A673 (cell line): ENCODE measurements at regions of chr6 and their contacts with region 1.

Region 1: GRCh38 chr6:11496152-11497060 is 41.1 kb upstream of the TMEM170B start:
- DNase-seq: peak; percentile 86
- H3K4me3 ChIP-seq: no peak overlapping the region
- H3K27ac ChIP-seq: no peak overlapping the region
- H3K4me1 ChIP-seq: no peaks in the 10 kb centered on the region
- H3K27me3 ChIP-seq: no peaks in the 10 kb centered on the region
- CTCF ChIP-seq: peak; percentile 92

Region 2: DNA sequence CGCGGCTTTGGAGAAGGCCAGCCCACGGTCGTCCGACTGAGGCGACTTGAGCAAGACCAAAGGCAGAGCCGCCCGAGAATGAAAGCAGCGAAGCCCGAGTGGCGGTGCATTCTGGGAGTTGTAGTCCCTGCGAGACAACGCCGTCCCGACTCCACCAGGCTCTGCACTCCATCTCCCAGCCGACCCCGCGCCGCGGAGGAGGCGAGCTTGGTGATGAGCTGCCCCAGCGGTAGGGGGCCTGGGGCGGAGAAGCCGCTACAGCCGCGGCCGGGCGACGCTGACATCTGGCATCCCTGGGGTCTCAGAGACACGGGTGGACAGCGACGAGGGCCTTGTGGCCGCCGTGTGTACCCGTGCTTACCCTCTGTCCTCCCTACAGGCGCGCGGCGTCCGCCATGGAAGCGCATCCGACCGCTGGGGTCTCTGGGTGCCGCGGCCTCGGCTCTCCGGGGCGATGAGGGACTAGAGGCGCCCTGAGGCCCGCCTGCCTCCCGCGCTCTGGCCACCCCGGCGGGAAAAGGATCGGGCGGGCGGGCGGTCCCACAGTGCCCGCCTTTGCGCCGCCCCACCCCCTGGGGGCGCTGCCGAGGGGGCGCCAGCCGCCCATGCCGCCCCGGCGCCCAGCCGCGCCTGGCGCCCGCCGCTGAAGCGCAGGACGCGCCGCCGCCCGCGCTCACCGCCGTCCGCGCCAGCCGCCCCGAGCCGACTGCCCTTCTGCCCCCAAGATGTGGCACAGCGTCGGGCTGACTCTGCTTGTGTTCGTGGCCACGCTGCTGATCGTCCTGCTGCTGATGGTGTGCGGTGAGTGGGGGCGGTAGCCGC is 402.6 kb before region 1 on chr6 and contains the start of gene SMIM13:
- CTCF ChIA-PET with region 1: no interaction called
- POLR2A ChIA-PET with region 1: no interaction called
- intact Hi-C with region 1: loop called (anchors 1 kb)
- DNase-seq: peak; percentile 99
- H3K4me3 ChIP-seq: peak within 1 kb of the TSS; percentile 84
- H3K27ac ChIP-seq: peak within 1 kb of the TSS; percentile 94
- H3K4me1 ChIP-seq: peaks cover 19% of the 10 kb centered on the region
- H3K27me3 ChIP-seq: no peaks in the 10 kb centered on the region
- CTCF ChIP-seq: peak; percentile 42
- total RNA-seq, gene SMIM13: 16.8 and 18.9 TPM in 2 replicates

Region 3: GRCh38 chr6:11172501-11173332 is 323.7 kb before region 1 on chr6:
- CTCF ChIA-PET with region 1: interaction called, 9 read pairs
- POLR2A ChIA-PET with region 1: no interaction called
- intact Hi-C with region 1: loop called (anchors 1 kb)
- DNase-seq: peak; percentile 76
- H3K4me3 ChIP-seq: no peak overlapping the region
- H3K27ac ChIP-seq: no peak overlapping the region
- H3K4me1 ChIP-seq: peaks cover 4% of the 10 kb centered on the region
- H3K27me3 ChIP-seq: no peaks in the 10 kb centered on the region
- CTCF ChIP-seq: peak; percentile 93

Region 4: DNA sequence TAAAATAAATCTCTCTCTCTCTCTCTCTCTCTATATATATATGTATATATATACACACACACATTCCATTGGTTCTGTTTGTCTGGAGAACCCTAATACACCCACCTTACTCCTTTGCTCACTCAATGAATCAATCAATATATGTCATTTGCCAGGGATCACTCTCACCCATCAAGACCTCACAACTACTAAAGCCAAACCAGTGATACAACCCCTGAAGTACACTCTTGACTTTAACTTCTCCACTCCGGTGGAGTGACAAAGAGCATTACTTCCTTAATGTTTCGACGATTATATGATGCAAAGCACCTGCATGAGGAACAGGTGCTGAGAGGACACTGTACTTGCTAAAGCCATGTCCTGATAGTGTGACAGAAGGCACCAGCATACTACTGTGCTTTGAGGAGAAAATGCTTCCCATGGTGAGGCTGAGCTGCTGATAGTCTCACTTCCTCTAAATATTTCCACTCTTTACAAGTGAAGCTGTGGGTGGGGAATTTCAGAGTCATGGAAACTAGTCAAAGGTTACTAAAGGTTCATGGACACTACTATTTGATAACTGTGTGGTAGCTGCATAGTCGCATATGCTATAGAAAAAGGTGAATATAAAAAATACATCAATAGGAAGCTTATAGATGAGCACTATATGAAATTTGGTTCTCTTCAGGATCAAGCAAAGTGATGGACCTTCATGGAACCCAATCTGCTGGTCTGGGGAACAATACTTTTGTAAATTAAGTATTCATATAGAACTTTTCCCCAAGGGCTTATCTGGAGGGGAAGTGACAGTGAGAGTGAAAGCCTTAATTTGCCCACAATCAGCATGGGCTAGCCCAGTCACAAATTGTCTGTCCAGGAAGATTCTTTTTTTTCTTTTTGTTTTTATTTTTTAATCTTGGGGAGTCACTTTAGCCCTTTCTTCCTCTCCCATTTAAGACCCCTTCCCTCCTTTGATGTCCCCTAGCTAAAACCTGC is 122.1 kb before region 1 on chr6:
- CTCF ChIA-PET with region 1: no interaction called
- POLR2A ChIA-PET with region 1: no interaction called
- intact Hi-C with region 1: loop called (anchors 5 kb)
- DNase-seq: no peak
- H3K4me3 ChIP-seq: no peak overlapping the region
- H3K27ac ChIP-seq: no peak overlapping the region
- H3K4me1 ChIP-seq: peaks cover 4% of the 10 kb centered on the region
- H3K27me3 ChIP-seq: no peaks in the 10 kb centered on the region
- CTCF ChIP-seq: no peak

Region 5: DNA sequence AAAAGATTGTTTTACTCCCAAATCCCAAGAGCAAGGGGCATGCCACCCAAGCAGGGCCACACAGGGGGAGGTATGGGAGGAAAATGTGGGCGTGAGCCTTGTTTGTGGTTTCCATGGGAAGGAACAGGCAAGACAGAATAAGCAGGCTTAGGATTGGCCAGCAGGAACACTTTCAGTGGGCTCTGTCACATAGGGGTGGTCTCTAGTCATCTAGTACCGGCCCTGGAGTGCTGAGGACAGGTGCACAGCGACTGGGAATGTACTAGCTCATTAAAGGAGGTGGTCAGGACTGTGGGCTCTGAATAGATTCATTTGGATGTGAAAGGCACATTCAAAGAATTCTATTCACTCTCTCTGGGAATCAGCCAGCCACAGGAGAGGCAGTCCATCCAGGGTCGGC is 1656.4 kb after region 1 on chr6:
- CTCF ChIA-PET with region 1: no interaction called
- POLR2A ChIA-PET with region 1: no interaction called
- intact Hi-C with region 1: no loop called
- DNase-seq: no peak
- H3K4me3 ChIP-seq: no peak overlapping the region
- H3K27ac ChIP-seq: no peak overlapping the region
- H3K4me1 ChIP-seq: no peaks in the 10 kb centered on the region
- H3K27me3 ChIP-seq: no peaks in the 10 kb centered on the region
- CTCF ChIP-seq: no peak